Natural killer cell (primary cell): ENCODE measurements at regions of chr4 and their contacts with region 1.

Region 1: DNA sequence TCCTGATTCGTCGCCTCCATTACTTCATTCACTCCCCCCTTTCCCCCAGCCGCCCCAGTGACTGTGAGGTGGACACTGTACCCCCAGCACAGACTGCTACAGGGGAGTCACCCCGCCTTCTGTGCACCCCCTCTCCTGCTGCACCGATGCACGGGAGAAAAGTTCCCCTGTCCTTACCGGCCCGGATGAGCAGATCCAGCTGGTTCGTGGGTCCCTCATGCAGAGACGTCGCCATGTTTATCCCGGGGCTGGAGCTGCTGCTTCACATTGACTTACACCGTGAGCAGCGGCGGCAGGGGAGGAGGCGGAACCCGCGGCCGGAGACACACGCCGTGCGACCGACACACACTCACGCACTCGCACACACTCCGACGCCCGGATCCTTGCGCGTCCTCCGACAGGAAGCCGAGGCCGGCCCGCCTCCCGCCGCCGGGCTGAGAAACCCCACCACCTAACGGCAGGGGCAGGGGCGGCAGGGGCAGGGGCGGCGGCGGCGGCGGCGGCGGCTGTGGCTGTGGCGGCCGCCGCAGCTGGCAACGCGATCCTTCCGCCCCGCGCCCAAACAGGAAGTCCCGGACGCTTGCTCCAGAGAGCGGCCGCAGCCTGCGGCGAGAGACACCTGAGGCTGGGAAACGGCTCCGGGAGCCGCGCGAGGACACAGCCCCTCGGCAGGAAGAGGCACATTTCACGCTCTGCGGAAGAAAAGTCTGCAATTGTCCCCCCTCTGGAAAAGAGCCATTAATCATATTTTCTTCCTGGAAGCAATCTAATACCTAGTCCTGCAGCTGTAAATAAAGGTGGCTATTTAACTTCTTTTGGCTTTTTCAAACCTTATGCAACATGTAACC is 68.6 kb downstream of the NOCT start:
- DNase-seq: peak; percentile 73 to 91
- ATAC-seq: peak; percentile 42 to 63 (median 52)
- H3K4me3 ChIP-seq: peak overlapping the region; percentile 89
- H3K4me3 Mint-ChIP-seq: peak overlapping the region; percentile 93
- H3K27ac ChIP-seq: peak overlapping the region; percentile 93
- H3K27ac Mint-ChIP-seq: peak overlapping the region; percentile 94 to 97
- H3K4me1 ChIP-seq: peaks cover 5% of the 10 kb centered on the region
- H3K4me1 Mint-ChIP-seq: peaks cover 44 to 49% of the 10 kb centered on the region in 2 donors
- H3K27me3 ChIP-seq: no peaks in the 10 kb centered on the region
- H3K27me3 Mint-ChIP-seq: no peaks in the 10 kb centered on the region
- CTCF ChIP-seq: no peak

Region 2: GRCh38 chr4:139015269-139015947 is 68.8 kb before region 1 on chr4 and contains the start of gene NOCT:
- intact Hi-C with region 1: loop called (anchors 1 kb)
- DNase-seq: peak; percentile 90 to 97
- ATAC-seq: peak; percentile 86 to 95 (median 87)
- H3K4me3 ChIP-seq: peak within 1 kb of the TSS; percentile 50
- H3K4me3 Mint-ChIP-seq: peak within 1 kb of the TSS; percentile 94
- H3K27ac ChIP-seq: peak within 1 kb of the TSS; percentile 77
- H3K27ac Mint-ChIP-seq: peak within 1 kb of the TSS; percentile 88 to 98
- H3K4me1 ChIP-seq: peaks cover 15% of the 10 kb centered on the region
- H3K4me1 Mint-ChIP-seq: peaks cover 10 to 11% of the 10 kb centered on the region in 2 donors
- H3K27me3 ChIP-seq: no peaks in the 10 kb centered on the region
- H3K27me3 Mint-ChIP-seq: peaks cover 0 to 4% of the 10 kb centered on the region in 2 donors
- CTCF ChIP-seq: no peak
- total RNA-seq, gene NOCT: 17.6 to 28.5 (median 20.9) TPM

Region 3: GRCh38 chr4:139030614-139031235 is 53.5 kb before region 1 on chr4:
- intact Hi-C with region 1: loop called (anchors 1 kb)
- DNase-seq: peak; percentile 60 to 92
- ATAC-seq: peak; percentile 70 to 94 (median 82)
- H3K4me3 ChIP-seq: no peak overlapping the region
- H3K4me3 Mint-ChIP-seq: no peak overlapping the region
- H3K27ac ChIP-seq: no peak overlapping the region
- H3K27ac Mint-ChIP-seq: peak overlapping the region; percentile 39 to 73
- H3K4me1 ChIP-seq: peaks cover 5% of the 10 kb centered on the region
- H3K4me1 Mint-ChIP-seq: peaks cover 17 to 25% of the 10 kb centered on the region in 2 donors
- H3K27me3 ChIP-seq: no peaks in the 10 kb centered on the region
- H3K27me3 Mint-ChIP-seq: no peaks in the 10 kb centered on the region
- CTCF ChIP-seq: peak; percentile 84

Region 4: DNA sequence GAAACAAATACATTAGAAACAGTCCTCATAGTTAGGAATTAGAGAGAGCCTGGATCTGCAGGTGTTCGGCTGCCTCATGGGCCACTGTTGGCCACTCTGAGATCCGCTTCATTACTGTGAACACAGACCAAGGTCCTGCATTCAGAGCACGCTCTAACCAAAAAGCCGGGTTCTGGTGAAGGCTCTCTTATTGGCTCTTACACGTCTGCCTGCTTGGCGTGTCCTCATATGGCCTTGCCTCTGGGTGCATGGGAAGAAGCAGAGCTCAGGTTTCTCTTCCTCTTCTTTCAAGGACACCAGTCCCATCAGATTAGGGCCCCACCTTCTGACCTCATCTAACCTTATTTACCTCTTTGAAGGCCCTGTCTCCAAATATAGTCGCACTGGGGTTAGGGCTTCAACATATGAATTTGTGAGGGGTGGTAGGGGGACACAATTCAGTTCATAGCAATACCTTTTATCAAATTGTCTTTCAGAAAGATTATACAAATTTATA is 129.9 kb after region 1 on chr4:
- intact Hi-C with region 1: no loop called
- DNase-seq: peak in 1 of 2 donors; percentile 13
- ATAC-seq: peak in 2 of 3 donors; percentile 38 to 43
- H3K4me3 ChIP-seq: no peak overlapping the region
- H3K4me3 Mint-ChIP-seq: no peak overlapping the region
- H3K27ac ChIP-seq: peak overlapping the region; percentile 27
- H3K27ac Mint-ChIP-seq: no peak overlapping the region
- H3K4me1 ChIP-seq: no peaks in the 10 kb centered on the region
- H3K4me1 Mint-ChIP-seq: no peaks in the 10 kb centered on the region
- H3K27me3 ChIP-seq: no peaks in the 10 kb centered on the region
- H3K27me3 Mint-ChIP-seq: no peaks in the 10 kb centered on the region
- CTCF ChIP-seq: no peak

Region 5: GRCh38 chr4:139278912-139279759 is 195.0 kb after region 1 on chr4:
- intact Hi-C with region 1: no loop called
- DNase-seq: peak in 1 of 2 donors; percentile 21
- ATAC-seq: peak in 2 of 3 donors; percentile 53 to 63
- H3K4me3 ChIP-seq: peak overlapping the region; percentile 26
- H3K4me3 Mint-ChIP-seq: peak overlapping the region; percentile 86
- H3K27ac ChIP-seq: no peak overlapping the region
- H3K27ac Mint-ChIP-seq: no peak overlapping the region
- H3K4me1 ChIP-seq: peaks cover 17% of the 10 kb centered on the region
- H3K4me1 Mint-ChIP-seq: peaks cover 19% of the 10 kb centered on the region in 2 donors
- H3K27me3 ChIP-seq: peaks cover 41% of the 10 kb centered on the region
- H3K27me3 Mint-ChIP-seq: peaks cover 32 to 41% of the 10 kb centered on the region in 2 donors
- CTCF ChIP-seq: no peak

Region 6: DNA sequence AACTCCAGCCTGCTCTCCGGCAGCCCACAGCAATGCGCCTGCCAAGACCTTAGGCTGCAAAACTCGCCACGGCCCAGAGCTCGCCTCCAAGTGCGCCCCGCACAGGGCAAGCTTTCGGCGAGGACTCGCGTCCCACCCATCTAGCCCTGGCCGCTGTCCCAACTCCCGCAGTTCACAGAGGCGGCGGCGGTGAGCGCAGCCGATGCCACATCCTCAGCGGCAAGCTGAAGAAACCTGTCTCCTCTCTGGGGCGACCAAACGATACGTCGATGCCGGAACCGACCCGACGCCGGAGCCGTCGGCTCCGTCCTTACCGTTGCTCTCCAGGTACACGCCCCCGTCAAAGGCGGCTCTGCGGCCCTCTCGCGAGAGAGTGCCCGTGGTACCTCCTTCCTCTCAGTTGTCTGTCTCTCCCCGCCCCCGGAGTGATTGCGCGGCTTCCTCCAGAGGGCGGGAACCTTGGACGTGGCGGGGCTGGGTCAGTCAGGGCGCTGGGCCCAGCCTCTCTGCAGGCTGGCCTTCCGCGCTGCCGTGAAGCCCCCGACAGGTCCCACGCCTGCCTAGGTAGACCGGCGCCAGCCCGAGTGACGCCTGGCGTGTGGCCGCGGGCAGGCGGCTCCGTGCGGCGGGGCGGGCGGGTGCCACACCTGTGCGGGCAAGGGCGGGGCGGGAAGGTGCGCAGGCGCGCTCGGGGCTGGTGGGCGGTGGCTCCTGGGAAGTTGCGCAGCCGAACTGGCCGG is 369.4 kb after region 1 on chr4:
- intact Hi-C with region 1: loop called (anchors 2 kb)
- DNase-seq: peak; percentile 91 to 97
- ATAC-seq: peak; percentile 89 to 96 (median 91)
- H3K4me3 ChIP-seq: peak overlapping the region; percentile 80
- H3K4me3 Mint-ChIP-seq: peak overlapping the region; percentile 99
- H3K27ac ChIP-seq: peak overlapping the region; percentile 89
- H3K27ac Mint-ChIP-seq: peak overlapping the region; percentile 99
- H3K4me1 ChIP-seq: peaks cover 20% of the 10 kb centered on the region
- H3K4me1 Mint-ChIP-seq: peaks cover 62% of the 10 kb centered on the region in 2 donors
- H3K27me3 ChIP-seq: no peaks in the 10 kb centered on the region
- H3K27me3 Mint-ChIP-seq: no peaks in the 10 kb centered on the region
- CTCF ChIP-seq: no peak